ENCODE measurements at regions of chr13 and their contacts with region 1.

Region 1: DNA sequence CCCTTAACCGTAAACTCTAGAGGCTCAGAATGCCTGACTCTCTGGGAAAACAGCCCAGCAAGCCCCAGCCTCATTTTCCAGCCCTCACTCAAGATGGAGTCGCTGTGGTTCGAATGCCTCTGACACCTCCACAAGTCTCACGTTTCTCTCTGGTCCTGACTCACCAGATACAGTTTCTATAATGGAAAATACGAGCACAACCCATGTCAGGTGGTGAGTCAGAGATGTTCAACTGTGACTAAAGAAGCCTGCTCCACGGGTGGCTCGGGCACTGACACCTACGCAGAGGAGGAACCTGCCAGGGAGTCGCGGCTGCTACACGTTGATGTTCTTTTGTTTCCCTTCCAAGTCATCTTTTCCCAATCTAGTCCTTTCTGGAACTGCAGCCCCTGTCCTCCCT is 87.1 kb upstream of the STK24 start:
- DNase-seq: no peak

Region 2: DNA sequence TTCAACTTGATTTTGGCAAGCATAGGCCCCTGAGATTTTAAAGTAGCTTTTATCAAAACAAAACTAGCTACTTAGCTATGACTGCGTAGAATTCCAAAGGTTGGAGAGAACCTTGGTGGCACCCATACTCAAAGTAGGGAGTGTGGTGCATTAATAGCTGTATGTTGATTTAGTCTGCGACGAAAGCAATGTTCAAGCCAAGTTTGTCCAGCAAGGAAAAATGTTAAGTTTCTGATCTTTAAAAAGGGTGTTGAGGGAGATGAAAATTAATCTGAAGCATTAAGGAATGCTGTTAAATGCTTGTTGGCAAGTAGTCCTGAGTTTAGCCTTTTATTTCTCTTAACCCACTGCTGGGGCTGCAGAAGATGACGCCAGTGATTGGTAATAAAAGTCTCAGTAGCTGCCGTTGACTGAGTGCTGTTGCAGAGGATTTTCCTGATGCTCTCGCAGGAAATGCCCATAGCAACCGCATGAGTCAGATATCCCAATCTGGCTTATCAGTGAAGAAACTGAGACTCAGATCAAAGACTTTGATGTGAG is 411.0 kb before region 1 on chr13:
- intact Hi-C with region 1: loop called in 1 of 2 experiments (anchors 2 kb)
- DNase-seq: no peak

Region 3: DNA sequence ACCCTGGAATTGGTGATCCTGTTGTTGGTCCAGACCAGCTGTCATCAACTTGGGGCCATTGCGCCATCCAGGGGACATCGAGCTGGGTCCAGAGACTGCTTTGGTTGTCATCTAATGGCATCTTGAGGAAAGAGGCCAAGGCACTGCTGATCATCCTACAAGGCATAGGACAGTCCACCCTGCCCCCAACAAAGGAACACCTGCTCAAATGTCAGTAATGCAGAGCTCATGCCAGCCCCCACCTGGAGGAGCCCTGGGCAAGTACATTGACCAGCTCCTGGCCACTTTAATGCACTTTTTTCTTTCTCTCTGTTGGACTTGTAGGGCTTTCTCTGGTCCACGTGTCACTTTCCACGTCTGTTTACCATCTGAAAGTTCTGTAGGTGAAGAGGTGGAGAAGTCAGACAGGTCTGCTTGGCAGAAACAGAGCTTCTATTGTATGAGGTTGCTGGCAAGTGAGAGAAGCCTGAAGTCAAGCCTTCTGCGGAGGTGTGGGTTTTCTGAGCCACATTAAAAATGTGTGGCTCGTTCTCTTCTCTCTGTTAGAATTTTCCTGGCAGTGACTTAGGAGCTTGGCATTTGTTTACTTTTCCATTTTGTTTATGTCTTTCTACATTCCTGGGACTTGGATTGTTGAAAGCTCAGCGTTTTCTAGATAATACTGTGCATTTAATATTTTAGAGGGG is 362.9 kb before region 1 on chr13:
- intact Hi-C with region 1: no loop called
- DNase-seq: no peak

Region 4: DNA sequence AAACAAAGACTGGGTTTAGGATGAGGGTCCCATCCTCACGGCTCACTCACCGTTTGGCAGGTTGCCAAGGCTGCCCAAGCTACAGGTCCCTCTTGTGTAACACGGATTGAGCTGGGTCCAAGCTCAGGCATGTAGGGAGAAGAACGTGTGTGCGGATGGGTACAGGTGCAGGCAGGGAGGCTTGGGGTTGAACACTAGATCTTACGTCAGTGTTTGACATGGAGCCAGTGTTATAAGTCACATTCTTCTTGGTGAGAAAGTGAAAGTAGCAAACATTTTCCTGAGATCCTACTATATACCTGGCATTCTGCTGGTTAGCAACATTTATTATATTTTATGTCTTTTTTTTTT is 350.1 kb before region 1 on chr13:
- intact Hi-C with region 1: no loop called
- DNase-seq: no peak

Region 5: DNA sequence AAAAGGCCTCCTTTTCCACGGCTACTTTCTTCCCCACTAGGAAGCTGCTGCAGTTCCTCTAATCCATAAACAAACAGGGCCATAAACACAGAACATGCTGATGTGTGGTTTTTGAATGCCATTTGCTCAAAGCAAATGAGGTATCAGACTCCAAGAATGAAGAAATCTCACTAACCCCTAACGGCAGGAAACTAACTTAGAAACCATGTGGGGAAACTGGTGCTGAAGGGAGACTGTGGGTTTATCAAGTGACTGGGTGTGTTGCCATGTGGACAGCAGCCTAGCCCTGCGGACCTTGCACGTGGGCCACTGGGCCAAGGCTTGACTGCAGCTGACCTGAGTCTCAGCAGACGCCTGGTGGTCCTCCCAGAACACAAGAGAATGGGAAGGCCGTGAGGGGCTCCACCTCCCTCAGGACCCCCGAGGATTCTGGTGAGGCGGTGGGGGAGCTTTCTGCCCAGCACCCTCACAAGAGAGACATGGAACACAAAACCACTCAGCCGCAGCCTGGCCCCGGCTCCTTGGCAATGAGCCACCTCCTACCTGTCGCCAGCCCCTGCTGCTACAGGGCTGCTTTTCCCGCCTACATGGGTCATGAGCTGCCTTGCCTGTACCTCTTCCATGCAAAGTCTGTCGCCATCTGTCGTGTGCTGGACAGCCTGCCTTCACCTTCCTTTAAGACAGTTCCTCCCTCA is 77.8 kb after region 1 on chr13:
- intact Hi-C with region 1: no loop called
- DNase-seq: no peak

Measured in posterior vena cava (tissue), 2 donors.